ENCODE measurements at regions of chr3 and their contacts with region 1.

Region 1: DNA sequence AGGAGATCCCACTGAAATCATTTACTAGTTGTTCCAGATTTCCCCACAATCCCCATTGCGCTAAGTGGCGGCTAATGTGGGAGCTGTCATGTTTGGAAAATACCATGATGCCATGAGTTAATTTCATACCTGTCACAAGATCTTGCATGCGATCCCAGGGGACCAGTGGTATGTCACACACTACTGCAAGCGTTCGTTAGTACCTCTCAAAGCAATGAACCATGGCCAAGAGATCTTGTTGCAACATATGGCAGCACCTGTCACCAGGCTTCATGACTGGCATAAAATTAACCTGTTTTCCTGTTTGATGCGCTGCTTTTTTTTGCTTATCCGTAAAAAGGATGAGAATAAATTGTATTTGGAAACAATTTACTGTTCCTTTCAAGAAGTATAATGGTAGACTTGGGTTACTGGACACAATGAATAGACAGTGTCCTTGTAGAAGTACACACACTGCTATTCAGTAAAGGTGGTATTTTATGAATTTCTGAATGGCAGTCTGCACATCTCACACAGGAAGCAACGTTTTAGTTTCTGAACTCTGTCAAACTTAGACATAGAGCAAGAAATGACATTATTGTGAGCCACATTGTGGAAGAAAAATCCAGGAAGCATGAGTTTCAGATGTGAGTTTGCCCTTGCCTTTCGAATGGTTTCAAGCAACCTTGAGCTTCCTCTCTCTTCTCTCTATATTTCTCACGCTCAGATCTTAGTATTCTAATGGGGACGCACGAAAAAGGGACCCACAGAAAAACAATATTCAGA is 81.9 kb downstream of the CHL1 start:
- DNase-seq: peak; percentile 89
- ATAC-seq: peak; percentile 87
- H3K4me3 ChIP-seq: peak overlapping the region; percentile 12
- H3K27ac ChIP-seq: peak overlapping the region; percentile 52; the same call in 1 of the 2 replicates
- H3K4me1 ChIP-seq: peaks cover 18% of the 10 kb centered on the region
- H3K27me3 ChIP-seq: no peaks in the 10 kb centered on the region
- CTCF ChIP-seq: no peak
- EP300 ChIP-seq: peak; percentile 91 to 92
- POLR2A ChIP-seq: no peak
- RAD21 ChIP-seq: no peak

Region 2: DNA sequence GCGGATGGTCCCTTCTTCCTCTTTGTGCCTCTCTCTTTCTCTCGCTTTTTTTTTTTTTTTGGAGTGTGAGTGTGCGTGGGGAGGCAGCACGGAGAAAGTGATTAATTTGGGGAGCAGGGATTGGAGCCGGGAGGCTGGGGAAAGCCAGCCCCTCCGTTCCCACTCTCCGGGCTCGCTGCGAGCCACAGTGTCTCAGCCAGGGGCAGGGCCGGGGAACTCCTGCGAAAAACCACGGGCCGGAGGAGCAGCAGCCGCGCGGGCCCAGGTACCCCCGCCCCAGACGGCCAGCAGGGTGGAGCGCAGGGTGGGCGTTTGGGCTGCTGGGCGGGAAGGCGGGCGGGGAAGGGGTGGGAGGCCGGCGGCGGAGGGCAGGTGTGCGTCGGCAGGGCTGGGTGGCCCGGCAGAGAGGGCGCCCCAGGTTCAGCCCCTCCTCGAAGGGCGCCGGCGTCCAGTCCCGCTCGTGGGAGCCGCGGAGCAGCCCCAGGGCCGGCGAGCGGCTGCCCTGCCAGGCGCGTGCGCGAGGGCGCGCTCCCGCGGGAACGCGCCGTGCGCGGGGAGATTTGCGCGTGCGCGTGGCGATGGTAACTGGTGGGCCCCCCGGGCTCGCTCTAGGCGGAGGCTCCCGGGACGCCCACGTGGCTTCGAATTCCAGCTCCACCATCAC is 80.5 kb before region 1 on chr3:
- CTCF ChIA-PET with region 1: no interaction called
- POLR2A ChIA-PET with region 1: no interaction called
- RAD21 ChIA-PET with region 1: interaction called, 7 read pairs
- SMC1A ChIA-PET with region 1: no interaction called
- in situ Hi-C with region 1: no loop called
- intact Hi-C with region 1: loop called (anchors 5 kb)
- DNase-seq: no peak
- ATAC-seq: peak; percentile 65
- H3K4me3 ChIP-seq: 0 out of 2 replicates have a peak overlapping the region, but pooled peaks have one; percentile 9
- H3K27ac ChIP-seq: no peak overlapping the region
- H3K4me1 ChIP-seq: no peaks in the 10 kb centered on the region
- H3K27me3 ChIP-seq: peaks cover 0 to 5% of the 10 kb centered on the region in 2 experiments; a peak in 2 of 4 replicates
- CTCF ChIP-seq: no peak
- EP300 ChIP-seq: no peak
- POLR2A ChIP-seq: no peak
- RAD21 ChIP-seq: no peak

Region 3: DNA sequence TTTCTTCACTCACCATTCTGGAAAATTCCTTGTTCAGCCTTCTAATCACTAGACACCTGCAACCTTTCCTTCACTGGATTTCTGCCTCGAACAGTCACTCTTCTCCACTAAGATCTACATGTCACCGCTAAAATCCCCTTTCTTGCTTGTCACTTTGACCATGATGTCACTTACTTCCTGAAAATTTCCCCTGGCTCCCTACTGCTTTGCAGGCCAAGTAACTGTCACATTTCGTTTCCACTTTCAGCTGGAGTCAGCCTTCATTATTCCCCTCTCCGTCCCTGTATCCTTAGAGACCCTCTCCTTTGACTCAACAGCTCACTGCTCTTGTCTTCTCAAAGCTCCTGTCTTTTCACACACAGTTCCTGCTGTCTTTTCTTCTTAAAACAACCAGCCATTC is 66.0 kb before region 1 on chr3:
- CTCF ChIA-PET with region 1: interaction called, 6 read pairs
- POLR2A ChIA-PET with region 1: interaction called, 12 read pairs
- RAD21 ChIA-PET with region 1: interaction called, 5 read pairs
- SMC1A ChIA-PET with region 1: interaction called, 20 read pairs
- in situ Hi-C with region 1: no loop called
- intact Hi-C with region 1: loop called (anchors 5 kb)
- DNase-seq: peak; percentile 50
- ATAC-seq: peak; percentile 89
- H3K4me3 ChIP-seq: no peak overlapping the region
- H3K27ac ChIP-seq: no peak overlapping the region
- H3K4me1 ChIP-seq: no peaks in the 10 kb centered on the region
- H3K27me3 ChIP-seq: no peaks in the 10 kb centered on the region
- CTCF ChIP-seq: no peak
- EP300 ChIP-seq: peak in 1 of 2 experiments; percentile 46; a peak in 1 of 4 replicates
- POLR2A ChIP-seq: no peak
- RAD21 ChIP-seq: no peak

Region 4: GRCh38 chr3:260911-261310 is 17.6 kb before region 1 on chr3:
- CTCF ChIA-PET with region 1: no interaction called
- POLR2A ChIA-PET with region 1: no interaction called
- RAD21 ChIA-PET with region 1: interaction called, 3 read pairs
- SMC1A ChIA-PET with region 1: interaction called, 13 read pairs
- in situ Hi-C with region 1: no loop called
- intact Hi-C with region 1: no loop called
- DNase-seq: no peak
- ATAC-seq: no peak
- H3K4me3 ChIP-seq: no peak overlapping the region
- H3K27ac ChIP-seq: no peak overlapping the region
- H3K4me1 ChIP-seq: no peaks in the 10 kb centered on the region
- H3K27me3 ChIP-seq: no peaks in the 10 kb centered on the region
- CTCF ChIP-seq: no peak
- EP300 ChIP-seq: no peak
- POLR2A ChIP-seq: no peak
- RAD21 ChIP-seq: no peak

Region 5: GRCh38 chr3:294096-294495 is 15.6 kb after region 1 on chr3:
- CTCF ChIA-PET with region 1: interaction called, 18 read pairs
- POLR2A ChIA-PET with region 1: interaction called, 22 read pairs
- RAD21 ChIA-PET with region 1: interaction called, 46 read pairs
- SMC1A ChIA-PET with region 1: interaction called, 65 read pairs
- in situ Hi-C with region 1: no loop called
- intact Hi-C with region 1: loop called (anchors 1 kb)
- DNase-seq: no peak
- ATAC-seq: no peak
- H3K4me3 ChIP-seq: no peak overlapping the region
- H3K27ac ChIP-seq: no peak overlapping the region
- H3K4me1 ChIP-seq: peaks cover 10% of the 10 kb centered on the region
- H3K27me3 ChIP-seq: no peaks in the 10 kb centered on the region
- CTCF ChIP-seq: no peak
- EP300 ChIP-seq: no peak
- POLR2A ChIP-seq: no peak
- RAD21 ChIP-seq: no peak

Region 6: DNA sequence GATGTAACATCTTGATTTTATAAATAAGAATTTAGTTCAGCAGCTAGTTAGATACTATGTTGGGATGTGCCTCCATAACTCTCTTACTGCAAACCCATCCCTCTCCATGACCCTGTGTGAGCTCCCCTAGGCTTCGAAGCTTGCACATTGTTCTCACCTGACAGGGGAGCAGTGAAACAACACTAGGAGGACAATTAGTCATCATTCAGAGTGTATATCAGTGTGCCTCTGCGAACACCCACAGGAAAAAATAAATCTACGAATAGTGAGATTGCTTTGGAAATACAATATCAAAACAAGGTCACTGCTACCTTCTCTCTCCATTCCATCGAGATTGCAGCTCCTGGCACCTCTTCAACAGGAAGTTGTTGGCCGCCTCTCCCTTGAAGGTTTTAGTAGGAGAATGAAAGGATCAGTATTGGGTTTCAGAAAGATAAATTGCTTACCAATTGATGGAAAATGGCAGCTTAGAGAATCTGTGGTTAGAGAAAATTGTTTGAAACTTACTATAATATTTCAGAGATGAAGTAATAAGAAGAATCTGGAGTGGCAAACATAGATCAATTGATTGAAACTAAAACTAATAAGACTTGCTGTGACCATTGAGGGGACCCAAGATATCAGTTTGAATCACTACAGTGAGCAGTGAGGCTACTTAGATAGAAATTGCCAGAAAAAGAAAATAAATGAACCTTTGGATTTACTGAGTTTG is 21.3 kb after region 1 on chr3:
- CTCF ChIA-PET with region 1: interaction called, 3 read pairs
- POLR2A ChIA-PET with region 1: interaction called, 5 read pairs
- RAD21 ChIA-PET with region 1: interaction called, 19 read pairs
- SMC1A ChIA-PET with region 1: interaction called, 40 read pairs
- in situ Hi-C with region 1: no loop called
- intact Hi-C with region 1: no loop called
- DNase-seq: no peak
- ATAC-seq: peak; percentile 94
- H3K4me3 ChIP-seq: no peak overlapping the region
- H3K27ac ChIP-seq: no peak overlapping the region
- H3K4me1 ChIP-seq: no peaks in the 10 kb centered on the region
- H3K27me3 ChIP-seq: no peaks in the 10 kb centered on the region
- CTCF ChIP-seq: no peak
- EP300 ChIP-seq: peak in 1 of 2 experiments; percentile 18; a peak in 1 of 4 replicates
- POLR2A ChIP-seq: no peak
- RAD21 ChIP-seq: no peak

Region 7: DNA sequence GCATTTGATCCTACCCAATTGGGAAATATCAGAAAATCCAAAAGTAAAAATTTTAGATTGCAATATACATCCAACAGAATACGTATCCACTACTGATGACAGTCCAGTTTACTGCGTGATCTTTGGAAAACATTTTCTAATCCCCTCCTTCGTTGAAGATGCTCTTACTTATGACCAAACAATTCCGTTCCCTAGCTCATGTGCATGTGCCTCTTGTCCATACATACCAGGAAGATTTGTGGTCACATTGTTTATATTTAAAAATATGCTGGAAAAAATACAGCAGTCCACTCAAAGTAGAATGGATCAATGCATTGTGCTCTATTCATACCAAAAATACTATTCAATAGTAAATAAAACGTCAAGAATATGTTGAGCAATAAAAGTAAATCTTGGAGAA is 53.4 kb after region 1 on chr3:
- CTCF ChIA-PET with region 1: interaction called, 3 read pairs
- POLR2A ChIA-PET with region 1: interaction called, 6 read pairs
- RAD21 ChIA-PET with region 1: interaction called, 10 read pairs
- SMC1A ChIA-PET with region 1: interaction called, 8 read pairs
- in situ Hi-C with region 1: no loop called
- intact Hi-C with region 1: no loop called
- DNase-seq: no peak
- ATAC-seq: no peak
- H3K4me3 ChIP-seq: no peak overlapping the region
- H3K27ac ChIP-seq: no peak overlapping the region
- H3K4me1 ChIP-seq: no peaks in the 10 kb centered on the region
- H3K27me3 ChIP-seq: no peaks in the 10 kb centered on the region; a peak in 1 of 4 replicates
- CTCF ChIP-seq: no peak
- EP300 ChIP-seq: no peak
- POLR2A ChIP-seq: no peak
- RAD21 ChIP-seq: no peak